Heart left ventricle (tissue), 16 donors: ENCODE measurements at regions of chr5 and their contacts with region 1.

Region 1: GRCh38 chr5:96677495-96677894 is 15.3 kb downstream of the CAST start:
- DNase-seq: no peak
- ATAC-seq: no peak
- H3K4me3 ChIP-seq: no peak overlapping the region
- H3K27ac ChIP-seq: no peak overlapping the region
- H3K4me1 ChIP-seq: peaks cover 0 to 34% (median 12%) of the 10 kb centered on the region in 12 donors
- H3K27me3 ChIP-seq: no peaks in the 10 kb centered on the region
- CTCF ChIP-seq: no peak
- POLR2A ChIP-seq: no peak

Region 2: GRCh38 chr5:96687812-96688453 is 10.4 kb after region 1 on chr5:
- intact Hi-C with region 1: loop called in 1 of 10 experiments (anchors 2 kb)
- DNase-seq: no peak
- ATAC-seq: peak in 3 of 4 donors; percentile 75 to 80 (median 76)
- H3K4me3 ChIP-seq: peak overlapping the region in 2 of 12 donors; percentile 3 to 12
- H3K27ac ChIP-seq: peak overlapping the region in 1 of 12 donors; percentile 47
- H3K4me1 ChIP-seq: peaks cover 0 to 34% (median 10%) of the 10 kb centered on the region in 12 donors
- H3K27me3 ChIP-seq: no peaks in the 10 kb centered on the region
- CTCF ChIP-seq: peak; percentile 39 to 65 (median 48)
- POLR2A ChIP-seq: no peak